Left lung (tissue), 14 donors: ENCODE measurements at regions of chr15 and their contacts with region 1.

Region 1: DNA sequence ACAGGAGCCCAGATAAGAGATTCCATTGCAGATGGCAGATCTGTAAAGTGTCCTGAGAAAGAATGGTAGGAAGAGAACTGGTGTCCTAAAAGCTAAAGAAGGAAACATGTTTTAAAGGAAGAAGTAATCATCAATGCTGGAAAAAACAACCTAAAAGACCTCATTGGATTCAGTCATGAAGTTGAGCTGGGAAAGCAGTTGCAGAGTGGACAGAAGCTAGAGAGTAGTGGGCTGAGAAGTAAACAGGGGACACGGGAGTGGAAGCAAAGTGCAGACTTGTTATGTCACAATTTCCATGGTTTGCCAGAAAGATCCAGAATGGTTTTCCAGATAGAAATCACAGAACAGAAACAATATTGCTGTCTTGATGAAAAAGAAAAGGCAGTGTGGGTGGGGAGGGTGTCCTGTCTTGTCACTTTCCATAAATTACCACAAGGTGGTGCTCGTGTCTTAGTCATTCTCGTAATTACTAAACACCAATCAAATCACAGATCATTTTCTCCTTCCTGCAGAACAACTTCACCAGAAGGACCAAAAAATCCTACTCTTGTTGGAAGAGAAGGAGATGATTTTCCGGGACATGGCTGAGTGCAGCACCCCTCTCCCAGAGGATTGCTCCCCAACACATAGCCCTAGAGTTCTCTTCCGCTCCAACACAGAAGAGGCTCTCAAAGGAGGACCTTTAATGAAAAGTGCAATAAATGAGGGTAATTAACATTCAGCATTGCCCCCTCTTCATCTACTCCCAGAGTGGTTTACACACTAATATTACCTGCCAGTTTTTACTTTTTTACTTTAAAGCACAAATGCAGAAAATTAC is 64.5 kb downstream of the KLHL25 start:
- DNase-seq: peak in 2 of 4 donors; percentile 73 to 78
- ATAC-seq: peak; percentile 77
- H3K4me3 ChIP-seq: no peak overlapping the region
- H3K27ac ChIP-seq: peak overlapping the region in 1 of 2 donors; percentile 55
- H3K4me1 ChIP-seq: peaks cover 0 to 8% of the 10 kb centered on the region in 2 donors
- H3K27me3 ChIP-seq: no peaks in the 10 kb centered on the region
- CTCF ChIP-seq: peak; percentile 64 to 75

Region 2: DNA sequence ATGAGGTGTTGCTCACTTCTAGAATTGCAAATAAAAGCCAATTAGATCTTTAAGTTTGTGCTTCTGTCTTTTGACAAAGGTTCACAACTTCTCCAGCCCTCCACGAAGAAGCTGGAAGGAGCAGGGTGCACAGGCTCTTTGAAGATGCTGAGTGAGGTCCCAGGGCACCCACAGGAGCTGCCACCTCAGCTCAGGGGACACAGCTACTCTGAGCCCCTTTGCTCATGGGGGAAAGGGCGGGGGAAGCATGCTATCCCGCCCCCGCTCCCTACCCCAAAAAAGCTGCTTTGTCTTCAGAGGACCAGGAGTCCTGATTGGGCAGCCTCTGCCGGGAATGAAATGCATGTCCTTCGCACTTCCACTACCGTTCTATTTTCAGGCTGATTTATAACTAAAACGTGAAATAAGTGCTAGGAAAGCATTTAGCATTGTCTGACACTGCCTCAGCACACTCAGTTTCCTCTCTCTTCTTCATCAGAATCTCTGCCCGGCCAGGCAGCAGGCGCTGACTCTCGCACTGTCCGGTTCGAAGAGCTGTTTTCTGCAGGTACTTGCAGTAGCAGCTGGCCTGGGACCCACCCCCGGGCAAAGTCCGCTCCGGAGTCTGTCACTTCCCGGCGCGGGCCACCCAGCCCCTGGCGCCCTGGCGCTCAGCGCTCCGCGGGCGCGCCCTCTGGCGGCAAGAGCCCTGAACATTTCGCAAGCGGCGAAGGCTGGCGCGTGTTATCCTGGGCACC is 110.0 kb after region 1 on chr15:
- intact Hi-C with region 1: loop called in 1 of 2 experiments (anchors 5 kb)
- DNase-seq: peak; percentile 73 to 97 (median 82)
- ATAC-seq: peak; percentile 96
- H3K4me3 ChIP-seq: peak overlapping the region in 1 of 2 donors; percentile 28
- H3K27ac ChIP-seq: no peak overlapping the region
- H3K4me1 ChIP-seq: peaks cover 8 to 11% of the 10 kb centered on the region in 2 donors
- H3K27me3 ChIP-seq: no peaks in the 10 kb centered on the region
- CTCF ChIP-seq: peak; percentile 88 to 93